ENCODE measurements at regions of chr18 and their contacts with region 1.

Region 1: GRCh38 chr18:37537868-37538525 is 27.6 kb downstream of the CELF4 start:
- DNase-seq: peak; percentile 48 to 66
- ATAC-seq: peak; percentile 86 to 97
- H3K4me3 ChIP-seq: no peak overlapping the region
- H3K27ac ChIP-seq: no peak overlapping the region
- H3K4me1 ChIP-seq: no peaks in the 10 kb centered on the region
- CTCF ChIP-seq: peak; percentile 51
- EP300 ChIP-seq: no peak
- POLR2A ChIP-seq: no peak
- RAD21 ChIP-seq: peak; percentile 60 to 63

Region 2: DNA sequence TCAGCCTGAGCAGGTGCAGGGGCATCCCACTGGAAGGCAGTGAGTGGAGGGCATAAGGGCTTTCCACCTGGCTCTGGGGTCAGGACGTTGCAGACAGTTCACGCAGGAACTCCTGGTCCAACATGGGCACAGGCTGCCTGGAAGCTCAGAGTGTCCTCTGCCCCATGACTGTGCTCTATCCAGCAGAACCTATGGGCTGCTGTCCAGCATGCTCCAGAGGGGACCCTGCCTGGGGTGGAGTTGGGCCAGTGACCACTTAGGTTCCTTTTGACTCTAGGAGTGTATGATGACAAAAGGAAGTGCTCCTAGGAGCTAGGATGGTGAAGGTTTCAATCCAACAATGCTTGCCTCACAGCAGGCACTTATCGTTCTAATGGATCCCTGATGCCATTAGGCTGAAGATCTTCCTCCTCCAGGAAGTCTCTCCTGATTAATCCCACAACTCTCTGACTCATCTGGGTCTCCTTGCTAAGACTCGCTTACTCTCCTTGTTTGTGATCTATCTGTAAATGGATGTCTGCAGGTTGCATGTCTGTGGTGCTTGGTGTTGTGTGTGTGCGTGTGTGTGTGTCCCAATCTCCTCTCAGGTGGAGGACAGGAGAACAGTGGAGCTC is 196.4 kb before region 1 on chr18:
- CTCF ChIA-PET with region 1: interaction called, 21 read pairs
- POLR2A ChIA-PET with region 1: no interaction called
- DNase-seq: no peak
- ATAC-seq: no peak
- H3K4me3 ChIP-seq: no peak overlapping the region
- H3K27ac ChIP-seq: no peak overlapping the region
- H3K4me1 ChIP-seq: no peaks in the 10 kb centered on the region
- CTCF ChIP-seq: no peak
- EP300 ChIP-seq: no peak
- POLR2A ChIP-seq: no peak
- RAD21 ChIP-seq: no peak

Region 3: DNA sequence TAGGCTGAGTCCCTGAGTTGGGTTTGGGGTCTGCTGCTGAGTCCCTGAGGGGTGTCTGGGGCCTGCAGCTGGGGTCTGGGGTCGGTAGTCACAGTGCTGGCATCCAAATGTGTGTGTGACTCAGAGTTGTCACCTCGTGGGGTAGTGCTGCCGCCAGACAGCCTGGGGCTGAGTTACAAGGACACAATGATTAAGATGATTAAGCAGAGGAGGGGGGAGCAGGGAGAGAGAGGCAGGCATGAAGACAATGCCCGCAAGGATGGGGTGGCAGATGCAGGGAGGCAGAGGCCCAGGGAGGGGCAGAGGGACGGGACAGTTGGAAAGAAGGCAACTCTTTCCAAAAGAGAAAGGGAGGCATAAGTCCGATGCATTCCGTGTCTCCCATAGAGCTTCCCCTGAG is 92.6 kb before region 1 on chr18:
- CTCF ChIA-PET with region 1: interaction called, 21 read pairs
- POLR2A ChIA-PET with region 1: no interaction called
- DNase-seq: no peak
- ATAC-seq: no peak
- H3K4me3 ChIP-seq: no peak overlapping the region
- H3K27ac ChIP-seq: no peak overlapping the region
- H3K4me1 ChIP-seq: no peaks in the 10 kb centered on the region
- CTCF ChIP-seq: no peak
- EP300 ChIP-seq: no peak
- POLR2A ChIP-seq: no peak
- RAD21 ChIP-seq: no peak

Measured in A549 (cell line).